ENCODE measurements at regions of chr1 and their contacts with region 1.

Region 1: GRCh38 chr1:156859523-156860112 is 701 bp upstream of the INSRR start:
- DNase-seq: no peak
- ATAC-seq: peak; percentile 52

Region 2: DNA sequence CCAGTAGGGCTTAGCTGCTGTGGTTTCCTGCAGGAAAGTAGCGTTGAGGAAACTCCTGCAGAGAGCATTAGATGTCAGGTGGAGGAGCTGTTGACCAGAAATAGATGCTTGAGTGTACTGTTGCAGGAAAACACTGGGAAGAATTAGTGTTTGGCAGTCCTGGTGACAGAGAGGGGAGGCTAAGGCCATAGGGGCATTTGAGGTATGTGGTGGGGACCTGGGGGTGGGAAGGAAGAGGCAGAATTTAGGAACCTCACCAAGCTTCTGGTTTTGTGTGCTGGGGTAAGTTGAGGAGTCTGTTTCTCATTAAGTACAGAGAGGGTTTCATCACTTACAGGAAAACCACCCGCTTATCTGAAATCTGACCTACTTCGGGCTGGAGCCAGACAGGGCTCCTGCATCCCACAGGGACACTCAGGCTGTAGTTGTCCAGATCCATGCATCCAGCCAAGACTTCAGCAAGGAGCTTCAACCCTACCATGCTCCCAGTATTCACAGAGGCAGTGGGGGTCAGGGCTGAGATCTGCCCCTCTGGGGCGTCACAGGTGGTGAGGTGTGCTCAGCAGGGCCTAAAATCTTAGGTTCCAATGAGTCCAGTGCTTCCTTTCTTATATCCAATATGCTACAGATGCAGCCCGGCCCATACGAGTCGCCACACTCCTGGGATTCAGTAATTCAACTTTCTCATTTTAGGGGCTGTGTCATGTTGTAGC is 58.1 kb before region 1 on chr1:
- intact Hi-C with region 1: loop called (anchors 5 kb)
- DNase-seq: no peak
- ATAC-seq: peak; percentile 80

Region 3: DNA sequence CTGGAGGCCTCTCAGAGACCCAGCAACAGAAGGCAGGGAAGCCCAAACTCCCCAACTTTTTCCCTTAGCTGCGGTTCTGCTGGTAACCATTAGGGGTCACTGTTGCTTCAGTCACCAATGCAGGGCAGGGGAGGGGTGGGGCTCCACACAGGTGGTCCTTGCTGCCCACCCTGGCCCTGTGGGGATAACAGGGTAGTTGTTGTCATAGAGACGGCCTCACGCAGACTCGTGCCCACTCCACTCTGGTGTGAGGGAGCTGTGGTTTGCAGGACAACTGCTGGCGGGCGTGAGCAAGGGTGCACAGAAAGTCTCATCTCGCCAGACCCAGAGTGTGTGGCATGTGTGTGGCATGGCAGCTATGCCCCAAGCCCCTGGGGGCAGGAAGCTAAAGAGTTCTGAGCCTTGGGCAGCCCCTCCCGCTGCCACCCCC is 20.6 kb before region 1 on chr1:
- intact Hi-C with region 1: loop called (anchors 2 kb)
- DNase-seq: no peak
- ATAC-seq: peak; percentile 71

Region 4: GRCh38 chr1:157124855-157125254 is 265.2 kb after region 1 on chr1:
- intact Hi-C with region 1: no loop called
- DNase-seq: no peak
- ATAC-seq: no peak

Measured in Right ventricle myocardium superior (tissue), 1 donor.